ENCODE measurements at regions of chr20 and their contacts with region 1.

Region 1: GRCh38 chr20:63009045-63009961 is 2.5 kb upstream of the BHLHE23 start:
- DNase-seq: peak; percentile 83 to 92
- ATAC-seq: peak; percentile 83 to 84 (median 84)
- H3K4me3 ChIP-seq: no peak overlapping the region
- H3K4me3 Mint-ChIP-seq: peak overlapping the region; percentile 60
- H3K27ac ChIP-seq: no peak overlapping the region
- H3K27ac Mint-ChIP-seq: peak overlapping the region in 1 of 2 donors; percentile 24
- H3K4me1 ChIP-seq: peaks cover 48% of the 10 kb centered on the region
- H3K4me1 Mint-ChIP-seq: peaks cover 10 to 29% of the 10 kb centered on the region in 2 donors
- H3K27me3 ChIP-seq: peaks cover 48% of the 10 kb centered on the region
- H3K27me3 Mint-ChIP-seq: peaks cover 45% of the 10 kb centered on the region in 2 donors
- CTCF ChIP-seq: peak; percentile 96

Region 2: GRCh38 chr20:62776692-62777527 is 232.4 kb before region 1 on chr20:
- intact Hi-C with region 1: no loop called
- DNase-seq: peak in 1 of 2 donors; percentile 79
- ATAC-seq: peak; percentile 60 to 87 (median 65)
- H3K4me3 ChIP-seq: no peak overlapping the region
- H3K4me3 Mint-ChIP-seq: peak overlapping the region; percentile 74
- H3K27ac ChIP-seq: peak overlapping the region; percentile 76
- H3K27ac Mint-ChIP-seq: peak overlapping the region; percentile 56 to 91
- H3K4me1 ChIP-seq: peaks cover 37% of the 10 kb centered on the region
- H3K4me1 Mint-ChIP-seq: peaks cover 8 to 28% of the 10 kb centered on the region in 2 donors
- H3K27me3 ChIP-seq: no peaks in the 10 kb centered on the region
- H3K27me3 Mint-ChIP-seq: no peaks in the 10 kb centered on the region
- CTCF ChIP-seq: no peak

Region 3: DNA sequence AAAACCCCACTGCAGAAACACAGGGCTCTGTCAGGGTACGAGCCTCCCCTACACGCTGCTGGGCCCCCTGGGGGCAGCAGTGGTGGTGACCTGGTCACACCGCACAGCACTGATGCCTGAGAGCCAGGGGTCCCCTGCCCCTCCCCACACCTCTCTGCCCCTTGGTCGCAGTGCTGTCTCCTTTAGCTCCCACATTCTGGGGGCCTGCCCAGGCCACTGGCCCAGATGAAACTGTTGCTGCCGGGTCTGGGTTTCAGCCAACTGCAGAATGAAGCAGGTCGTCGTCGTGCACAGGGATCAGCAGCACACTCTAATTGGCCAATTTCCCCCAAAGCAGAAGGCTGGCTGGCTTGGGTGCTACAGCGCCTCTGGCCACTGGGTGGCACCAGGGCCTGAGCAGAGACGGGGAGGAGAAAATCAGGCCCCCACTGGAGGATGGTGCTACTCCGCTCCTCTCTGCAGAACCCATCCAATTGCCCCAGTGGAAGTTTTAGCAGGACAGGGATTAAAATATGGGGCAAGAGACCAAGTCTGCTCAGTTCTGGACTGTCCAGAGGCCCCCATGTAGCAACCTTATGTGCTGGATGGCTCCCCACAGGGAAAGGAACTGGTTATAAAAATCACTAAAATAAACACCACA is 109.1 kb before region 1 on chr20:
- intact Hi-C with region 1: loop called (anchors 1 kb)
- DNase-seq: peak; percentile 69 to 88
- ATAC-seq: peak; percentile 92 to 98 (median 96)
- H3K4me3 ChIP-seq: no peak overlapping the region
- H3K4me3 Mint-ChIP-seq: peak overlapping the region; percentile 31
- H3K27ac ChIP-seq: peak overlapping the region; percentile 12
- H3K27ac Mint-ChIP-seq: peak overlapping the region; percentile 57 to 77
- H3K4me1 ChIP-seq: peaks cover 13% of the 10 kb centered on the region
- H3K4me1 Mint-ChIP-seq: peaks cover 26 to 29% of the 10 kb centered on the region in 2 donors
- H3K27me3 ChIP-seq: no peaks in the 10 kb centered on the region
- H3K27me3 Mint-ChIP-seq: no peaks in the 10 kb centered on the region
- CTCF ChIP-seq: peak; percentile 96

Measured in natural killer cell (primary cell).